Heart left ventricle (tissue), 16 donors: ENCODE measurements at regions of chr19 and their contacts with region 1.

Region 1: GRCh38 chr19:4909897-4910593 is 744 bp downstream of the UHRF1 start:
- DNase-seq: peak; percentile 92 to 96 (median 93)
- ATAC-seq: peak; percentile 89 to 98 (median 97)
- H3K4me3 ChIP-seq: peak overlapping the region; percentile 32 to 93 (median 72)
- H3K27ac ChIP-seq: peak overlapping the region in 1 of 12 donors; percentile 80
- H3K4me1 ChIP-seq: peaks cover 4 to 52% (median 20%) of the 10 kb centered on the region in 12 donors
- H3K27me3 ChIP-seq: peaks cover 0 to 10% (median 0%) of the 10 kb centered on the region in 9 donors
- CTCF ChIP-seq: no peak
- POLR2A ChIP-seq: no peak

Region 2: DNA sequence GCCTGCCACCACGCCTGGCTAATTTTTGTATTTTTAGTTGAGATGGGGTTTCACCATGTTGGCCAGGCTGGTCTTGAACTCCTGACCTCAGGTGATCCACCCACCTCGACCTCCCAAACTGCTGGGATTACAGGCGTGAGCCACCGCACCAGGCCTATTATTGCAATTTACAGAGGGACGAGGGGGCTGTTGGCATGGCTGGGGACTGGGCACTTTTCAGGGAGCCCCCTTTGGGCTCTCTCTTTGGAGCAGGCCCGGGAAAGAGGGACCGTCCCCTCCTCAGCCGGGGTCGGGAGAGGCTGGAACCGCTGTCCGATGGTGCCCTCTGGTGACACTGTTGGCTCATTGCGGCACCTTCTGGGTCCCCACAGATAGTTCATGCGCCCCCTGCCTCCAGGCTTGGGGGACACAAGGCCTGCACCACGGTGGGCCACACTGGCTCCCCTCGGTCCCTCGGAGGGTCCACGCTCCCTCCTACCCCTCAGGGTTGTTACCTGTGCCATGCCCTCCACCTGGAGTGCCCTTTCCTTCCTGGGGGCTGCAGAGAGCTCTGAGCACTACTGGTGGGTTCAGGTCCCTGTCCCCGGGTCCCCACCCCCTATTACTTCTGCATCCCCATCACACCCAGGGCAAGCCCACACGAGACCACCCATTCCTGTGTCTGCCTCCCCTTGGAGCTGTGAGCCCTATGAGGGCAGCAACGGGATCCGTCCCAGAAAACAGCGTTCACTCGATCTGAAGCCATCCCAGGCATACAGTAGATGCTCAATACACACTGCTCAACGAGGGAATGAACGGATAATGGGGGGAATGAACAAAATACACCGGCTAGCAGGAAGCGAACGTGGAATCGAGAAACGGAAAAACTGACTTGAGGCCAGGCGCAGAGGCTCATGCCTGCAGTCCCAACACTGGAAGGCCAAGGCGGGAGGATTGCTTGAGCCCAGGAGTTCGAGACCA is 106.0 kb before region 1 on chr19:
- intact Hi-C with region 1: loop called in 4 of 10 experiments (anchors 2 to 5 kb)
- DNase-seq: peak; percentile 55 to 79 (median 65)
- ATAC-seq: peak in 3 of 4 donors; percentile 59 to 68 (median 68)
- H3K4me3 ChIP-seq: no peak overlapping the region
- H3K27ac ChIP-seq: peak overlapping the region in 2 of 12 donors; percentile 67 to 76
- H3K4me1 ChIP-seq: peaks cover 0 to 34% (median 11%) of the 10 kb centered on the region in 12 donors
- H3K27me3 ChIP-seq: no peaks in the 10 kb centered on the region
- CTCF ChIP-seq: peak; percentile 65 to 87 (median 77)
- POLR2A ChIP-seq: no peak

Region 3: GRCh38 chr19:4815426-4816201 is 94.4 kb before region 1 on chr19:
- intact Hi-C with region 1: loop called in 6 of 10 experiments (anchors 1 to 5 kb)
- DNase-seq: peak; percentile 89 to 94 (median 93)
- ATAC-seq: peak; percentile 87 to 94 (median 92)
- H3K4me3 ChIP-seq: peak overlapping the region in 8 of 12 donors; percentile 0 to 44 (median 28)
- H3K27ac ChIP-seq: peak overlapping the region in 6 of 12 donors; percentile 12 to 66 (median 23)
- H3K4me1 ChIP-seq: peaks cover 0 to 36% (median 19%) of the 10 kb centered on the region in 12 donors
- H3K27me3 ChIP-seq: no peaks in the 10 kb centered on the region
- CTCF ChIP-seq: no peak
- POLR2A ChIP-seq: no peak

Region 4: GRCh38 chr19:4867534-4868285 is 42.3 kb before region 1 on chr19 and contains the start of gene PLIN3:
- intact Hi-C with region 1: loop called (anchors 1 to 5 kb)
- DNase-seq: peak; percentile 97 to 98 (median 97)
- ATAC-seq: peak; percentile 96 to 99 (median 98)
- H3K4me3 ChIP-seq: peak within 1 kb of the TSS; percentile 53 to 92 (median 80)
- H3K27ac ChIP-seq: peak within 1 kb of the TSS in 11 of 12 donors; percentile 55 to 93 (median 82)
- H3K4me1 ChIP-seq: peaks cover 0 to 35% (median 9%) of the 10 kb centered on the region in 12 donors
- H3K27me3 ChIP-seq: no peaks in the 10 kb centered on the region
- CTCF ChIP-seq: no peak
- POLR2A ChIP-seq: peak in 1 of 2 donors; percentile 66
- total RNA-seq, gene PLIN3: 17.4 to 70.9 (median 22.9) TPM

Region 5: DNA sequence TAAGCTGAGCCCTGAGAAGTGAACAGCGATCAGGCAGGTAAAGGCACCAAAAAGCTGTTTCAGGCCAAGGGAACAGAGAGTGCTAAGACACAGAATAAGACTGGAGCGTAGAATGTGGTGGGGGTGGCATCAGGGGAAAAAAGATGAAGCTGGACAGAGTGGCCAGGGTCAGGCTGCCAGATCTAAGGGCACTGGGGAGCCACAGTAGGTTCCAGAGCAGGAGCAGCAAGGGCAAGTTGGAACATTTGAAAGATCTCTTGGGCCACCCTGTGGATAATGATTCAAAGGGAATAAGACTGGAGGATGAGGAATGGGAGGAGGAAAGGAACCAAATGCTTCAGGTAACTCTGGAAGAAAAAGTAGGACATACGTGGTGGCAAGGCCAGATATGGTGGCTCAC is 36.1 kb before region 1 on chr19:
- intact Hi-C with region 1: loop called (anchors 1 to 5 kb)
- DNase-seq: no peak
- ATAC-seq: no peak
- H3K4me3 ChIP-seq: no peak overlapping the region
- H3K27ac ChIP-seq: no peak overlapping the region
- H3K4me1 ChIP-seq: peaks cover 0 to 18% (median 0%) of the 10 kb centered on the region in 12 donors
- H3K27me3 ChIP-seq: peaks cover 0 to 12% (median 0%) of the 10 kb centered on the region in 9 donors
- CTCF ChIP-seq: no peak
- POLR2A ChIP-seq: no peak

Region 6: GRCh38 chr19:4933528-4933927 is 23.5 kb after region 1 on chr19:
- intact Hi-C with region 1: no loop called
- DNase-seq: no peak
- ATAC-seq: no peak
- H3K4me3 ChIP-seq: no peak overlapping the region
- H3K27ac ChIP-seq: no peak overlapping the region
- H3K4me1 ChIP-seq: no peaks in the 10 kb centered on the region
- H3K27me3 ChIP-seq: no peaks in the 10 kb centered on the region
- CTCF ChIP-seq: no peak
- POLR2A ChIP-seq: no peak

Region 7: GRCh38 chr19:5048091-5048726 is 138.2 kb after region 1 on chr19:
- intact Hi-C with region 1: no loop called
- DNase-seq: peak; percentile 72 to 86 (median 77)
- ATAC-seq: peak; percentile 66 to 88 (median 85)
- H3K4me3 ChIP-seq: no peak overlapping the region
- H3K27ac ChIP-seq: no peak overlapping the region
- H3K4me1 ChIP-seq: peaks cover 0 to 49% (median 23%) of the 10 kb centered on the region in 12 donors
- H3K27me3 ChIP-seq: no peaks in the 10 kb centered on the region
- CTCF ChIP-seq: peak; percentile 92 to 98 (median 96)
- POLR2A ChIP-seq: no peak